Colonic mucosa (tissue), 4 donors: ENCODE measurements at regions of chr6 and their contacts with region 1.

Region 1: DNA sequence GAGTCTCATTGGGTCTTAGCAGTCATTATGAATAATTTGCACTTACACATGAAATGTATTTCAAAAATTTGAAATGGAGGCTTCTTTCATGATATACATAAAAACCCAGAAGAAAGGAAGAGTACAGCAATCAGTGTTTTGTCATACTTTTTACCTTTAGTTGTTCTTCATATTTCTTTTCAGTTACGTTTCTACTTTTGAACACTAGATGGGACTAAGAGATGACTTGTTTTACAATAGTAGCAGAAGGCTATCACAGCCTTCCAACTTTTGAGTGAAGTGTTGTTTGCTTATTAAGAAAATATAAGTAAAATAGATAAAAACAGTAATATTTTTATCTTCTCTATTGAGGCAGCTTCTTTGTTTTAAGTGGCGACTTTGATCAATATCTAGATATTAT is 58.1 kb downstream of the L3MBTL3 start:
- DNase-seq: no peak
- H3K4me3 ChIP-seq: no peak overlapping the region
- H3K27ac ChIP-seq: no peak overlapping the region
- H3K4me1 ChIP-seq: no peaks in the 10 kb centered on the region
- H3K27me3 ChIP-seq: no peaks in the 10 kb centered on the region
- CTCF ChIP-seq: no peak

Region 2: DNA sequence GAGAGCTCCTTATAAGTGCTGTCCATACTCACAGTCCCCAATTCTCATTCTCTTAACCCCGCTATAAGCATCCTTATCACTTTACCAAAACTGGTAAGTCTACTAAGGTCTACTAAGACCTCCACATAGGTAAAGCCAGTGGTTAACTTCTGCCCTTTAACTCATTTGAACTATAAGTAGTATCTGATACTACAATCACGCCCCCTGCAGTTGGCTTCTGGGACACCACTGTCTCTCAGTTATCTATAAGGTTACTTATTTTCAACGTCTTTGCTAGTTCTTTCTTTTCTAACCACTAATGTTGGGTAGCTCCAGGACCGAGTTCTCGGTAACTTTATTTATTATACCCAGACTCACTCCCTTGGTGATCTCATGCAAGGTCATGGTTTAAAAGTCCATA is 509.1 kb before region 1 on chr6:
- intact Hi-C with region 1: no loop called
- DNase-seq: peak; percentile 21
- H3K4me3 ChIP-seq: no peak overlapping the region
- H3K27ac ChIP-seq: no peak overlapping the region
- H3K4me1 ChIP-seq: no peaks in the 10 kb centered on the region
- H3K27me3 ChIP-seq: no peaks in the 10 kb centered on the region
- CTCF ChIP-seq: peak; percentile 16

Region 3: GRCh38 chr6:130132286-130132701 is 55.8 kb after region 1 on chr6:
- intact Hi-C with region 1: no loop called
- DNase-seq: peak; percentile 62
- H3K4me3 ChIP-seq: no peak overlapping the region
- H3K27ac ChIP-seq: peak overlapping the region; percentile 68
- H3K4me1 ChIP-seq: peaks cover 4% of the 10 kb centered on the region
- H3K27me3 ChIP-seq: no peaks in the 10 kb centered on the region
- CTCF ChIP-seq: no peak

Region 4: GRCh38 chr6:130282234-130282995 is 205.9 kb after region 1 on chr6:
- intact Hi-C with region 1: loop called (anchors 5 kb)
- DNase-seq: no peak
- H3K4me3 ChIP-seq: no peak overlapping the region
- H3K27ac ChIP-seq: no peak overlapping the region
- H3K4me1 ChIP-seq: no peaks in the 10 kb centered on the region
- H3K27me3 ChIP-seq: no peaks in the 10 kb centered on the region
- CTCF ChIP-seq: peak; percentile 34